ENCODE measurements at regions of chr16 and their contacts with region 1.

Region 1: DNA sequence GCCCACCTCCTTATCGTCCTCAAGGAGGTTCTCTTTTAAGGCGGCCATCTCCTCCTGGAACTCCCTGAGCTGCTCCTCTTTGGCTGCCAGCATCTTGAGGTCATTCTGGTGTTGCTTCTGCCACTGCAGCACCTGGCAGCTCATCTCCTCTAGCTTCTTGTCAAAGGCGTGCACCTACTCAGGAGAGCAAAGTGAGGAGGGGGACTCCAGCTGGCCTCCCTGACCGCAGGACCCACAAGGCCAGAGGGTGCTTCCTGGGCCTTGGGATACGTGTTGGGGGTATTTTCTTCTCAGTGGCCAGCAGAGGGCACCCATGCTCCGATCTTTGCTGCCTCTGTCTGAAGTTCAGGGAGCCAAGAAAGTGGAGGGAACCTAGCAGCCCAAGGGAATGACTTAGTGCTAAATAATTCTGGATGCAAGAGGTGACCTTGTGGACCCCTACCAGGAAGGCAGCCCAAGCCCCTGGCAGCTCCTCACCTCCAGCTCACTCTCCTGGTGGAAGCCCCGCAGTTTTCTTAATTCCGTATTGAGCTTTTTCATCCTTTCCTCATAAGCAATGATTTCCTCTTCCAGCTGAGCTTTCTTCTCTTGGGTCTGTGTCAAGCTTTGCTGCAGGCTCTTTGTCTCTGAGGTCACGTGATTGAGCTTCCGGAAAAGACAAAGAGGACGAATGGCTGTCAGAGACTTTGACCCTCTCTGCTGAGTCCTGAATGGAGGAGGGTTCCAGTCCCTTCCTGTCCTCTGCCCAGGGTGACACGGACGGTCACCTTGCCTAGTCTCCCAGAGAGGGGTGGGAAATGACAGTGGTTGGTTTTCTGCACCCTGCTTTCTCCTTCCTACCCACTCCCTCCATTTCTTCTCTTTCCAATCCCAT is 31.4 kb downstream of the DHX38 start:
- DNase-seq: peak; percentile 54 to 78
- ATAC-seq: peak; percentile 50 to 72 (median 58)
- H3K4me3 ChIP-seq: no peak overlapping the region
- H3K4me3 Mint-ChIP-seq: no peak overlapping the region
- H3K27ac ChIP-seq: no peak overlapping the region
- H3K27ac Mint-ChIP-seq: no peak overlapping the region
- H3K4me1 ChIP-seq: no peaks in the 10 kb centered on the region
- H3K4me1 Mint-ChIP-seq: no peaks in the 10 kb centered on the region
- H3K27me3 ChIP-seq: no peaks in the 10 kb centered on the region
- H3K27me3 Mint-ChIP-seq: no peaks in the 10 kb centered on the region
- CTCF ChIP-seq: peak; percentile 81

Region 2: GRCh38 chr16:71933913-71934695 is 190.9 kb before region 1 on chr16:
- intact Hi-C with region 1: no loop called
- DNase-seq: no peak
- ATAC-seq: no peak
- H3K4me3 ChIP-seq: no peak overlapping the region
- H3K4me3 Mint-ChIP-seq: no peak overlapping the region
- H3K27ac ChIP-seq: no peak overlapping the region
- H3K27ac Mint-ChIP-seq: peak overlapping the region; percentile 36 to 67
- H3K4me1 ChIP-seq: no peaks in the 10 kb centered on the region
- H3K4me1 Mint-ChIP-seq: peaks cover 2 to 9% of the 10 kb centered on the region in 2 donors
- H3K27me3 ChIP-seq: no peaks in the 10 kb centered on the region
- H3K27me3 Mint-ChIP-seq: no peaks in the 10 kb centered on the region
- CTCF ChIP-seq: no peak

Region 3: GRCh38 chr16:72467157-72467759 is 342.3 kb after region 1 on chr16:
- intact Hi-C with region 1: loop called (anchors 2 kb)
- DNase-seq: peak in 1 of 2 donors; percentile 29
- ATAC-seq: peak in 1 of 3 donors; percentile 32
- H3K4me3 ChIP-seq: no peak overlapping the region
- H3K4me3 Mint-ChIP-seq: no peak overlapping the region
- H3K27ac ChIP-seq: no peak overlapping the region
- H3K27ac Mint-ChIP-seq: no peak overlapping the region
- H3K4me1 ChIP-seq: no peaks in the 10 kb centered on the region
- H3K4me1 Mint-ChIP-seq: peaks cover 0 to 12% of the 10 kb centered on the region in 2 donors
- H3K27me3 ChIP-seq: no peaks in the 10 kb centered on the region
- H3K27me3 Mint-ChIP-seq: no peaks in the 10 kb centered on the region
- CTCF ChIP-seq: no peak